Endothelial cell of umbilical vein (primary cell): ENCODE measurements at regions of chr17 and their contacts with region 1.

Region 1: DNA sequence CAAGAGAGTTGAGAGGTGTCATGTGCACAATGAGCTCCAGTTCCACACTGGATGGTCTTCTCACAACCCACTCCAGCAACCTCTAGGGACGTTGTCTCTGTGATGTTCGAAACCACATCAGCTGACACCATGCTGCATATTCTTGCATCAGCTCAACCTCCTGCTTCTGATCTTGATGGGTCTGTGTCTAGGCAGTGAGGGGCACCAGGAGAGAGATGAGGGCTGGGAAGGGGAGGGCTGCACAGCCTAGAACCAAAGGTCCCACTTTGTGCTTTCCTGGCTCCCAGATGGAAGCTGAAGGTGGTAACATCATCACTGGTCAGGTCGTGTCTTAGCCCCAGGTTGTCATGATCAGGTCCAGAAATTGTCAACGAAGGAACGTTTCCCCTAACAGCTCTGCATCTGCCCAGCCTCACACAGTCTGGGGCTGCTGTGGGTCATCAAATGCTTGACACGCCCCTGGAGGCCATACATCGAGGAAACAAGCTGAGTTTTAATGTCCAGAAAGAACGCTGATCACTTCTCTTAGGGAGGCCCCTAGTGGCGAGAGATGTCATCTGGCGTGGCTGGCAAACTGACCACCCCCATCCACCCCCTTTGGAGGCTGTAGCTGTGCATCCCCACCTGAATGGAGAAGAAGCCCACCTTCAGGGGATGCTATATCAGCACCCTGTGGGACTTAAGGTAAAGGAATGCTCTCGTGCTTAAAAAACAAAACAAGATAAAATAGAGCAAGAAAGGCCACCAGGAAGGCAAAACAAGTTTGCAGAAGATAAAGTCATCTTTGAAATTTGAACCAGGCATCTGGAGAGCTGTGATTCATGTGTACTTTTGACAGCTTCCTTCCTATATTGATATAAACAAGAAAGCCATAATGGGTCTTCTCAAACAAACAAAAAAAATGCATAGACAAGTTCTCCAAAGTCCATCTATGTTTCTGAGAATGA is 58.3 kb downstream of the WIPI1 start:
- DNase-seq: peak; percentile 76
- H3K4me3 ChIP-seq: no peak overlapping the region
- H3K27ac ChIP-seq: no peak overlapping the region
- H3K4me1 ChIP-seq: peaks cover 11% of the 10 kb centered on the region
- H3K27me3 ChIP-seq: no peaks in the 10 kb centered on the region
- CTCF ChIP-seq: peak; percentile 90 to 91
- POLR2A ChIP-seq: no peak

Region 2: DNA sequence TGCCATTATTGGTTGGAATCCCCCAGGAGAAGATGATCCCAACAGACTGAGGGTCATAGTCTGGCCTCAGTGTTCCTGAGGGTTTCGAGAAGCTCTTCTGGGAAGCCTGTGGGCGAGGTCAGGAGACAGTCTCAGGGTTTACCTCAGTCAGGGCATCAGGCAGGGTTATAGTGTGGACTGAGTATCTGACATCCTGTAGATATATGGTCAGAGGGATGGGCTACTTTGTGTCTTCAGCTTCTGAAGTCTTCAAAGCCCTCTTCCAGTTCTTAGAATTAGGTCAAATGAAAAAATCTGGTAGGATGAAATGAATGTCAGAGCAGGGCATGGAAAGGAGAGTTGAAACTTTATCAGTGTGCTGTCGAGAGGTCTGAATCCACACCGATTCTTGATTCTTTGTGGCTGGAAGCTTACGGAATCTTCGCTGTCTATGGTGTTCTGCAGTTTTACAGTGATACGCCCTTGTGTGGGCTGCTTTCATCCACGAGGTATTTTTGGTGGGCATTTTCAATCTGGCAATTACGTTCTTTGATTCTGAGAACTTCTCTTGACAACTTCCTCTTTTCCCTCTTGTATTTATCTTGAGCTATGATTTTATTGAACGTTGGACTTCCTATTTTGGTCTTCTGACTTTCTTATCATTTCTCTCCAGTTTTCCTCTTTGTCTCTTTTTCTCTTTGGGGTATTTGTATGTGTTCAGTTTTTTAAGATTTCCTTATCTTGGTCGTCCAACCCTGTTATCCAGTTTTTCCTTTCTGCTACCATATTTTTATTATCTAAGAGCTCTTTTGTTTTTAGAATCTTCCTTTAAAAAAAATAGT is 543.2 kb before region 1 on chr17:
- CTCF ChIA-PET with region 1: no interaction called
- POLR2A ChIA-PET with region 1: no interaction called
- dilution Hi-C with region 1: no loop called
- intact Hi-C with region 1: no loop called
- DNase-seq: peak; percentile 77
- H3K4me3 ChIP-seq: no peak overlapping the region
- H3K27ac ChIP-seq: no peak overlapping the region
- H3K4me1 ChIP-seq: peaks cover 6% of the 10 kb centered on the region
- H3K27me3 ChIP-seq: no peaks in the 10 kb centered on the region
- CTCF ChIP-seq: no peak
- POLR2A ChIP-seq: peak; percentile 30

Region 3: DNA sequence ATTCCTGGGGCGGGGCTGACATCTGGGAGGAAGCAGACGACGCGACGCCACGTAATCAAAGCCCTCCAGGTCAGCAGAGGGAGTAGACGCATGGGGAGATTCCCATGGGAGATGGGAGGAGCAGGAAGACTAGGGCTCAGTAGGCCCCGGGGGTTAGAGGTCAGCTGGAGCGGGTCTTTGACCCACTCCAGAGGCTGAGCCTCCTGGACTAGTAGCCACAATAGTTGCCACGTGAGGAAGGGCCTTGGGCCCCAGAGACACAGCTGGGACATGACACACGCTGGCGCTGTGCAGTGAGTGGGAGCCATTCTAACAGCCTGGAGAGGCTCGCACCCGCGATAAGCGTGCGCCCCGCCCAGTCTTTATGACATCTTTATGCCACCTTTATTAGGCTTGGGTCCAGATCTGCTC is 246.8 kb before region 1 on chr17:
- CTCF ChIA-PET with region 1: no interaction called
- POLR2A ChIA-PET with region 1: no interaction called
- dilution Hi-C with region 1: no loop called
- intact Hi-C with region 1: no loop called
- DNase-seq: no peak
- H3K4me3 ChIP-seq: no peak overlapping the region
- H3K27ac ChIP-seq: no peak overlapping the region
- H3K4me1 ChIP-seq: no peaks in the 10 kb centered on the region
- H3K27me3 ChIP-seq: peaks cover 0 to 3% of the 10 kb centered on the region in 2 experiments
- CTCF ChIP-seq: no peak
- POLR2A ChIP-seq: no peak

Region 4: DNA sequence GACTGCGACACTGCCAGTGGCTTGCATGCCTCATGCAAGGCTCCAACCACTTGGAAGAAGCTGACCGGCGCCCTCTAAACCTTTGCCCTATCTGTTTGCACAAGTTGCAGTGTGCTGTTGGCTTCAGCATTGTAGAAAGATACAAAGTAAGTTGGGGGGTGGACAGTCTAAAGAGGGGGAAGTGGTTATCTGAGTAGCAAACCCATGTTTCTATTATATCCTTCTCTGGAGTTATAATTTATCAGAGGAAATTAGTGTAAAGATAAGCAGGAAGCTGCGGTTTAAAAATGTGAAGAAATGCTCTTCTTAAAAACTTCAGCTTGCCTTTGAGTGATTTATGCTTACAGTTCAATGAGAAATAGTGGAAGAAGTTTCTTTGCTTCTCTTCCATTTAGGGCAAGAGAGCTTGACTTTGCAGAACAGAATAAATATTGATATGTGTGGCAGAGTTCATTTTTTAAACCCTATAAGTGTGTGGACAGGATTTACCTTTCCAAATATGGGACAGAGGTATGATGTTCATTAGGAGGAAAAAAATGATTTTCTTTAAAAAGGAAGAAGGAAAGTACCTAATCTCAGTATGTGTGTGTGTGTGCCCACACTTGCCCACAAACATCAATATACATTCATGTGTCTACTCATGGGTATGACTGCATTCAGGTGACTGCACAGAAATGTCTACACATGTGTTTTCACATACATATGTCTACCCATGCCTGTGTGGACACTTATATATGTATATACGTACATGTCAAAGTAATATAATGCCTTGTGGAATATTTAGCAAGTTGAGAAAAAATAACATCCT is 143.0 kb before region 1 on chr17:
- CTCF ChIA-PET with region 1: interaction called, 143 read pairs
- POLR2A ChIA-PET with region 1: no interaction called
- dilution Hi-C with region 1: no loop called
- intact Hi-C with region 1: no loop called
- DNase-seq: no peak
- H3K4me3 ChIP-seq: no peak overlapping the region
- H3K27ac ChIP-seq: no peak overlapping the region
- H3K4me1 ChIP-seq: peaks cover 20% of the 10 kb centered on the region
- H3K27me3 ChIP-seq: no peaks in the 10 kb centered on the region
- CTCF ChIP-seq: no peak
- POLR2A ChIP-seq: no peak

Region 5: GRCh38 chr17:68302066-68302601 is 96.8 kb before region 1 on chr17:
- CTCF ChIA-PET with region 1: interaction called, 48 read pairs
- POLR2A ChIA-PET with region 1: no interaction called
- dilution Hi-C with region 1: no loop called
- intact Hi-C with region 1: no loop called
- DNase-seq: peak; percentile 97
- H3K4me3 ChIP-seq: no peak overlapping the region
- H3K27ac ChIP-seq: peak overlapping the region; percentile 77
- H3K4me1 ChIP-seq: peaks cover 36% of the 10 kb centered on the region
- H3K27me3 ChIP-seq: no peaks in the 10 kb centered on the region
- CTCF ChIP-seq: peak in 1 of 2 donors; percentile 1
- POLR2A ChIP-seq: no peak

Region 6: DNA sequence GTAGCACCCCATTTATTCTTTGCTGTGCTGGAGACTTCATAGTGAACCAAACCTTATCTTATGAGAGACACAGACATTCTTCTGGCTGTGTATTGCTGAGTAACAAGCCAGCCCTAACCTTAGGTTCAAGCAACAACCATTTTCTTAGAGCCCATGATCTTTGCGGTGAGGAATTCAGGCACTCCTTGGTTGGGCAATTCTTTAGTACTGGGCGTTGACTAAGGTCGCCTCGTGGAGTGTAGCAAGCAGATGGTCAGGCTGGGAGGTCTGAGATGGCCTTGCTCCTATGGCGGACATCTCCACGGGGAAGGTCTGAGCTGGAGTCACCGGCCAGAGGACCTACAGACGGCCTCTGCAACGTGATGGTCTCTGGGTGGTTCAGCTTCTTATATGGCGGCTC is 64.6 kb before region 1 on chr17:
- CTCF ChIA-PET with region 1: interaction called, 44 read pairs
- POLR2A ChIA-PET with region 1: no interaction called
- dilution Hi-C with region 1: no loop called
- intact Hi-C with region 1: no loop called
- DNase-seq: no peak
- H3K4me3 ChIP-seq: no peak overlapping the region
- H3K27ac ChIP-seq: no peak overlapping the region
- H3K4me1 ChIP-seq: peaks cover 2% of the 10 kb centered on the region
- H3K27me3 ChIP-seq: no peaks in the 10 kb centered on the region
- CTCF ChIP-seq: no peak
- POLR2A ChIP-seq: no peak

Region 7: DNA sequence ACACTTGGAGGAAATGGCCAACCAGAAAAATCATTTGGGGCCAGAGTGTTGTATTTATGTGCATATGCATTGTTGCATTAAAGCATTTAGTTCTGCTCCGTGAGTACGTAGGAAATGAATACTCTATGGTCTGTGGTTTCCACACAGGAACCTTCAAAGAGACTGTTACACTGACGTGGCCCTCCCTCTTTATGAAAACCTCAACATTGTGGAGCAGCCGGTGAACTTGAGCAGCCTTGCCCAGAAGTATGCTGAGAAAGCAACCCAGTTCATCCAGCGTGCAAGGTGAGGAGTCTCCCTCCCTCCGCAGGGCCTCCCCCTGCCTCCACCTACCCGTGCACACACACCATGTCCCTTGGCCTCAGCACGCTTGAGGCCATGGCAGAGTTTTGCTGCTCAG is 42.4 kb before region 1 on chr17:
- CTCF ChIA-PET with region 1: interaction called, 28 read pairs
- POLR2A ChIA-PET with region 1: no interaction called
- dilution Hi-C with region 1: no loop called
- intact Hi-C with region 1: no loop called
- DNase-seq: no peak
- H3K4me3 ChIP-seq: no peak overlapping the region
- H3K27ac ChIP-seq: no peak overlapping the region
- H3K4me1 ChIP-seq: peaks cover 14% of the 10 kb centered on the region
- H3K27me3 ChIP-seq: no peaks in the 10 kb centered on the region
- CTCF ChIP-seq: no peak
- POLR2A ChIP-seq: no peak

Region 8: GRCh38 chr17:68420065-68420464 is 21.1 kb after region 1 on chr17:
- CTCF ChIA-PET with region 1: interaction called, 13 read pairs
- POLR2A ChIA-PET with region 1: no interaction called
- dilution Hi-C with region 1: no loop called
- intact Hi-C with region 1: no loop called
- DNase-seq: no peak
- H3K4me3 ChIP-seq: no peak overlapping the region
- H3K27ac ChIP-seq: no peak overlapping the region
- H3K4me1 ChIP-seq: no peaks in the 10 kb centered on the region
- H3K27me3 ChIP-seq: no peaks in the 10 kb centered on the region
- CTCF ChIP-seq: no peak
- POLR2A ChIP-seq: no peak

Region 9: DNA sequence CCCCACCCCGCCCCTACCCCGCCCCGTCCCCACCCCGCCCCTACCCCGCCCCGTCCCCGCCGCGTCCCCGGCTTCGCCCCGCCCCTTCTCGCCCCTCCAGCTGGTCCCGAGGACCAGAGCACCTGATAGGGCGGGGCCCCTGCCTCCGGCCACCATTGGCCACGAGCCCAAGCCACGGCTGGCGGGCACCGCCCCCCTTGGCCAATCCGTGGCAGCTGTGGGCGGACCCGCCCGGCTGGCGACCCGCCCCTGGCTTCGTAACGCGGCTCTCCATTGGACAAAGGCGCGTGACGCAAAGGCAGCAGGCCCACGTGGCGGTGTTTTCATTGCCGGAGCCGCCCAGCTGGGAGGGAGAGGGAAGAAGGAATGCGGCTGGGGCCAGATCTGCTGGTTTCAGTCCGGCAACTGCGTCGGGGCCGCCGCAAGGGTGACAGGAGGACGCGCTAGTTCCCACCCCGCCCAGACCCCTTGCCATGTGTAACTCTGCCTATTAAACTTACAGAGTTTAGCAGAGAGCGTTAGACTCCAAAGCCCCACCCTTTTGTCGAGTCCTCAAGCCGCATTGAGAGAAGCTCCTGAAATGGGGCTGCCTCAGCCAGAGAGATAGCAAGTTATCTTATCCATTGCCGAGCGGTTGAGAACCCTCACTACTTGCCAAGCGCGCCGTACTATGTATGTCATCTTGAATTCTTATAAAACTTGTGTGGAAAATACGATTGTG is 58.7 kb after region 1 on chr17:
- CTCF ChIA-PET with region 1: interaction called, 11 read pairs
- POLR2A ChIA-PET with region 1: no interaction called
- dilution Hi-C with region 1: no loop called
- intact Hi-C with region 1: no loop called
- DNase-seq: peak; percentile 99
- H3K4me3 ChIP-seq: peak overlapping the region; percentile 20 to 54 (median 48)
- H3K27ac ChIP-seq: no peak overlapping the region
- H3K4me1 ChIP-seq: peaks cover 18% of the 10 kb centered on the region
- H3K27me3 ChIP-seq: no peaks in the 10 kb centered on the region
- CTCF ChIP-seq: no peak
- POLR2A ChIP-seq: peak; percentile 31

Region 10: DNA sequence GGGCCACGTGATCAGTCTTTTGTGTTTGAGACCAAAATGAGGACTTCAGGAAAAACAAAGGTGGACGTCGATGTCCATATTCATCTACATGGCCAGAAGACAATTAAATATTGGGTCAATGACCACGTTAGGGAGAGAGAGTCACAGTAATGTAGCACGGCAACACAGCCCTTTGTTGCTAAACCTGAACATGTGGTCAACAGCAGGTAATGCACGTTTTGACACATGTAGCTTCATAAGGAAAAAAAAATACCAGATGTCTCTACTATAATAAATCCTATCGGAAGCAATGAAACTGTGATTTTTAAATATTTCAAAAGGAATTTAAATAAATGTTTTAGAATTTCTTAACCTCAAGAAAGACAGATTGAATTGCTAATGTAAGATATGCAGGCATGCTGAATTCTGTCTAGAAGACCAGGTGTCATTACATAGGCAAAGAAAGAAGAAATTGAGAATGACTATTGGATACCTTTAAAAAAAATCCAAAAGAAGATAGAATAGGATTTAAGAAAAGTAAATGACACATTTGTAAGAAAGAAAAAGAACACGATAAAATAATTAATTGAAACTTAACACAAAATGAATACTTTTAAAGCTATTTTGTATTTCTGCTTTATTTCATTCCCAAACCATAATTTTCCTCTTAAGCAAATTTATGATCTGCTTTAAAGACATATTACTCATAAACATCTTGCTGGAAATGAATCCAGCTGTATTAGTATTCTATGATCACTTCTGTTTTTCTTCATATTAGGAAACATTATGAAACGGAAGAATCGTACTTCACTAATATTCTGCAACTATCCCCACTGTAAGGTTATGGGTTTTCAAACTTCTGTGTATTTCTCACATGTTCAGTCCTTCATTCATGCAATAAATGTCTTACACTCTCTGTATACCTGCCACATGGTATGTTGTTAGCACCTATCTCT is 526.1 kb after region 1 on chr17:
- CTCF ChIA-PET with region 1: no interaction called
- POLR2A ChIA-PET with region 1: no interaction called
- dilution Hi-C with region 1: no loop called
- intact Hi-C with region 1: no loop called
- DNase-seq: no peak
- H3K4me3 ChIP-seq: no peak overlapping the region
- H3K27ac ChIP-seq: no peak overlapping the region
- H3K4me1 ChIP-seq: peaks cover 17% of the 10 kb centered on the region
- H3K27me3 ChIP-seq: no peaks in the 10 kb centered on the region
- CTCF ChIP-seq: no peak
- POLR2A ChIP-seq: no peak